ENCODE measurements at regions of chr7 and their contacts with region 1.

Region 1: GRCh38 chr7:97835296-97836138 is 36.7 kb downstream of the ASNS start:
- DNase-seq: peak; percentile 74
- ATAC-seq: no peak

Region 2: GRCh38 chr7:97104719-97105238 is 730.7 kb before region 1 on chr7:
- intact Hi-C with region 1: loop called (anchors 1 kb)
- DNase-seq: peak; percentile 90
- ATAC-seq: peak; percentile 95

Region 3: GRCh38 chr7:97499204-97499603 is 336.3 kb before region 1 on chr7:
- intact Hi-C with region 1: loop called (anchors 5 kb)
- DNase-seq: no peak
- ATAC-seq: no peak

Region 4: GRCh38 chr7:97731736-97732564 is 103.6 kb before region 1 on chr7 and contains the start of gene TAC1:
- intact Hi-C with region 1: no loop called
- DNase-seq: peak; percentile 22
- ATAC-seq: no peak
- total RNA-seq, gene TAC1: not detected

Region 5: DNA sequence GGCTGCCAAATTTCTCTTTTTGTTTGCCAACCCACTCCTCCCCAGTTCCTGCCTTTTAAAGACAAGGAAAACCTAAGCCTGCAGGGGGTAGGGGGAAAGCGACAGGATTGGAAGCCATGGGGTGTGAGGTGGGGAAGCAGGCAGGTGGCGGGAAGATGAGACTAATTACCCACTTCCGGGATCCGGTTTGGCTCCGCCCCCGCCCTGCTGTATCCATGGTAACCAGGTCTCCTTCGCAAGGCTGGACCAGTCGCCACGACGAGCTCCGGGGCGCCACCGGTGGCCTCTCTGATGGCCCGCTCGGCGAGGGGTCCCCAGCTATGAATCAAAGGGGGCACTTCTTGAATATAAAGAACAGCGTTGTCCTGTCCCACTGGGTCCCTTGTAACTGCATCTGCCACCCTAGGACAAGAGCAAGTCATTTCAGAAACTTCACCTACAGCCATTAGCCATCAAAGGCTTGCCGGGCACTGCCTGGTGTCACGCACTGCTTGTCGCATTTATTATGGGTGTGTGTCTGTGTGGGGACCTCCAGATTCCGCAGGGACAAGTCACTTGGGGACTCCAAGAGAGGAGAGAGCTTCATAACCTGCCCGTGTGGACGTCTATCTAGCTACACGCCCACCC is 215.7 kb after region 1 on chr7:
- intact Hi-C with region 1: no loop called
- DNase-seq: no peak
- ATAC-seq: no peak

Region 6: DNA sequence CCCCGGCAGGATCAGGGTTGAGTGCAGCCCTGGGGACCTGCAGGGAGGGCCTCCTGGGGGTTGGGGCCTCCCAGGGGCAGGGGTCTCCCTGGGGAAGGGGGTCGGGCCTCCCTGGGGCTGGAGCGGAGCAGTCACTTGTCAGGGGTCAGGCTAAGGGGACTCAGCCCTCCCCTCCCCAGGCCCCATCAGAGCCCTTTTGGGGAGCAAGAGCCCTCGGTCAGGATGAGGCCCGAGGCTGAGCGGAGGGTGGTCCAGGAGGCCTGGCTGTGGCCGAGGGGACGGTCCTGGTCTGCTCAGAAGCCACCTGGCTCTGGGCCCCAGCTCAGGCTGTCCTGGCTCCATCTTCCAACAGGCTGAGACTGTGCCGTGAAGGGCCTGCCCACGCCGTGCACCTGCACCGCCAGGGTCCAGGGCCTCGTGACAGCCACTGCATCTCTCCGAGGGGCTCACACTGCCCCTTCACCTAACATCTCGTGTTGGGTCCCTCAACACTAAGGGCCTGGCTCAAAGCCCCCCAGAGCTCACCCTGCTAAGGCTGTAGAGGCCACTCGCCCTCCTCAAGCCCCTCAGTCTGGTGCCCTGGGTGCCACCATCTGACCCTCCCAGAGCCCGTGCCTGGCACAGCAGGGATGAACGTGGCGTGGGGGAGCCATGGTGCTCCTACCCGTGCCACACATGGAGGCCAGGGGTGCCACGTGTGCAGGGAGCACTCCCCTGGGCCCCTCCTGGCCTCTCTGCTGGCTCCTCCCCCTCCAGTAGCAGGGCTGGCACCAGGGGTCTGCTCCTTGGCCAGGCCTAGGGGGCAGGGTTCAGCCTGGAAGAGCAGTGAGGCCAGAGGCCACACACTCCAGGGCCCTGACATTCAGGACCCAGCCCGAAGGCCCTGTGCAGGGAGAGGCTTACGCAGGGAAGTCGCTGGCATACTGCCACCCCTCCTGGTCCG is 388.7 kb after region 1 on chr7:
- intact Hi-C with region 1: no loop called
- DNase-seq: peak; percentile 48
- ATAC-seq: no peak